ENCODE measurements at regions of chr13 and their contacts with region 1.

Region 1: DNA sequence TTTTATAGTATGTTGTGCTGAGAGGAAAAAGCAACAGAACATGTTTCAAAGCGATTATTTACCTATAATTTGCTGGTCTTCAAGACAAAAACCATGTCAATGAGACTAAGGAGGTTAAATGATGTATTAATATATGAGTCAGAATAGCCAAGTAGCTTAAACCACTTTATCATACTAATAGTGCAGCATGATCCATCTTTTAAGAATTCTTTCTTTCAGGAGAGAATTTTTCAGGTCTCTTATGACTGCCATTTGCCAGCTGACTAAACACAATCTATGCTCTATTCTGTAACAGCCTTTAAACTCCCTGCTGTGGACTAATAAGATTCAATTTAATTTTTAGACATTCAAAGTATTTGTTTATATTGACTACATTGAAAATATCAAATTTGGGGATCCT is 93.7 kb downstream of the TRPC4 start:
- DNase-seq: no peak
- ATAC-seq: no peak

Region 2: GRCh38 chr13:36945078-36945477 is 830.8 kb before region 1 on chr13:
- intact Hi-C with region 1: loop called (anchors 5 kb)
- DNase-seq: no peak
- ATAC-seq: no peak

Measured in sciatic nerve (tissue), 2 donors.